GM12878 (cell line): ENCODE measurements at regions of chr2 and their contacts with region 1.

Region 1: GRCh38 chr2:30165050-30165520 is 18.3 kb downstream of the YPEL5 start:
- DNase-seq: peak; percentile 57
- ATAC-seq: peak; percentile 99
- H3K4me3 ChIP-seq: no peak overlapping the region
- H3K27ac ChIP-seq: no peak overlapping the region
- H3K4me1 ChIP-seq: no peaks in the 10 kb centered on the region; the same call in 1 of the 2 replicates
- H3K27me3 ChIP-seq: peaks cover 0 to 2% of the 10 kb centered on the region in 2 experiments; a peak in 1 of 4 replicates
- CTCF ChIP-seq: peak; percentile 71 to 91 (median 89)
- EP300 ChIP-seq: no peak
- POLR2A ChIP-seq: no peak
- RAD21 ChIP-seq: peak; percentile 92

Region 2: DNA sequence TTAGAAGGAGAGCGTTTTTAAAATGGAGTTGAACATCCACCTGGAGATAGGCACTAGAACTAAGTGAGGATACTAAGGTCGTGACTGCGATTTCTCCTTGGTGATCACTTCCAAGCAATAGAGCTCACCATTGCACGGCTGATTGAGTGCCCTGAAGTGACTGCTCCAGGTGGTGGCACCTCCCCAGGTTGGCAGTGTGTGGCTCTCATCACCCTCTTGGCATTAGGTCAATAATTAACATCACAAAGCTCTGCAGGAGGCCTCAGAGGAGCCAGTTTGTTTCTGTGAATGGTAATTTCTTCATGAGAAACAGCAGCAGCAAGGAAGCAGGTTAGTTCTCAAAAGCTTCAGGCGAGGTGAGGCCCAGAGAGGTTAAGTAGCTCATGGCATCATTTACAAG is 790.3 kb before region 1 on chr2:
- CTCF ChIA-PET with region 1: no interaction called
- POLR2A ChIA-PET with region 1: no interaction called
- RAD21 ChIA-PET with region 1: no interaction called
- SMC1A ChIA-PET with region 1: no interaction called
- in situ Hi-C with region 1: no loop called
- intact Hi-C with region 1: no loop called
- DNase-seq: no peak
- ATAC-seq: no peak
- H3K4me3 ChIP-seq: no peak overlapping the region
- H3K27ac ChIP-seq: no peak overlapping the region
- H3K4me1 ChIP-seq: no peaks in the 10 kb centered on the region
- H3K27me3 ChIP-seq: no peaks in the 10 kb centered on the region; a peak in 3 of 4 replicates
- CTCF ChIP-seq: no peak
- EP300 ChIP-seq: no peak
- POLR2A ChIP-seq: no peak
- RAD21 ChIP-seq: no peak

Region 3: DNA sequence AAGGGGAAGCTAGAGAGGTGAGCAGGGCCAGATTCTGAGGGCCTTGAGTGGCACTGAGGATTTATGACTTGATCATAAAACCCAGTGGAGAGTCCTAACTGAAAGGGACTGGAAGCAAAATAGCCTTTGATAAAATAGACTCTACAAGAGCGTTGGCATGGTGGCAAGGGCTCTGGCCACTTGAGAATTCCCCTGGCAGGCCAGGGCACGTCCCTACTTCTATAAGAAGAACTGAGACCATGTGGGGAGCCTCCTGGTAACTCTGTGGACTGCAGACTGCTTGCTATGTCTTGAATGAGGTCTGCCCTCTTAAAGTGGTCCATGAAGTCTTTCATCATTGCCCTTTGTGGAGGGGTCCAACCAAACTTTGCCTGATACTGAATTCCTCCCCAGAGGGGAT is 568.5 kb before region 1 on chr2:
- CTCF ChIA-PET with region 1: no interaction called
- POLR2A ChIA-PET with region 1: no interaction called
- RAD21 ChIA-PET with region 1: no interaction called
- SMC1A ChIA-PET with region 1: no interaction called
- in situ Hi-C with region 1: no loop called
- intact Hi-C with region 1: no loop called
- DNase-seq: peak; percentile 17
- ATAC-seq: peak; percentile 93
- H3K4me3 ChIP-seq: no peak overlapping the region
- H3K27ac ChIP-seq: no peak overlapping the region
- H3K4me1 ChIP-seq: no peaks in the 10 kb centered on the region; the same call in 1 of the 2 replicates
- H3K27me3 ChIP-seq: no peaks in the 10 kb centered on the region
- CTCF ChIP-seq: no peak
- EP300 ChIP-seq: no peak
- POLR2A ChIP-seq: no peak
- RAD21 ChIP-seq: no peak

Region 4: DNA sequence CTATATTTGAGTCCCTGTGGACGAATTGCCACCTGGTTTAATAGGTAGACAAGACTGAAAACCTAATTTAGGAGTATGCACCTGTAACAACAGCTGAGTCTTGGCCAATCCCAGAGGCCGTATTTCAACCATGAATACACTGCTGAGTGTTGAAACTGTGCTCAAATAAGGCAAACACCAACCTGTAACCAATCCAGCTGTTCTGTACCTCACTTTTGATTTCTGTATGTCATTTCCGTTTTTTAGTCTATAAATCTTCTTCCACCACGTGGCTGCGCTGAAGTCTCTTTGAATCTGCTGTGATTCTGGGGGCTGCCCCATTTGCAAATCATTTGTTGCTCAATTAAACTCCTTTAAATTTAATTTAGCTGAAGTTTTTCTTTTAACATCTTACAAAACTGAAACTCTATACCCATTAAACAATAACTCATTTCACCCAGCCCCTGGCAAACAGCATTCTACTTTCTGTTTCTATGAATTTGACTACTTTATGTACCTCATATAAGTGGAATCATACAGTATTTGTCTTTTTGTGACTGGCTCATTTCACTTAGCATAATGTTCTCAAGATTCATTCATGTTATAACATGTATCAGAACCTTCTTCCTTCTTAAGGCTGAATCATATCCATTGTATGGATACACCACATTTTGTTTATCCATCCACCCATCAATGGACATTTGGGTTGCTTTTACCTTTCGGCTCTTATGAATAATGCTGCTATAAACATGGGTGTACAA is 25.8 kb before region 1 on chr2:
- CTCF ChIA-PET with region 1: interaction called, 28 read pairs
- POLR2A ChIA-PET with region 1: no interaction called
- RAD21 ChIA-PET with region 1: interaction called, 5 read pairs
- SMC1A ChIA-PET with region 1: interaction called, 18 read pairs
- in situ Hi-C with region 1: no loop called
- intact Hi-C with region 1: no loop called
- DNase-seq: no peak
- ATAC-seq: peak; percentile 89
- H3K4me3 ChIP-seq: no peak overlapping the region
- H3K27ac ChIP-seq: no peak overlapping the region
- H3K4me1 ChIP-seq: 0 out of 2 replicates have a peak, but pooled peaks cover 3% of the 10 kb centered on the region
- H3K27me3 ChIP-seq: no peaks in the 10 kb centered on the region
- CTCF ChIP-seq: no peak; a peak in 1 of 6 replicates
- EP300 ChIP-seq: no peak
- POLR2A ChIP-seq: no peak
- RAD21 ChIP-seq: 0 out of 2 replicates have a peak, but pooled peaks have one; percentile 16

Region 5: GRCh38 chr2:30193104-30193681 is 28.1 kb after region 1 on chr2:
- CTCF ChIA-PET with region 1: interaction called, 36 read pairs
- POLR2A ChIA-PET with region 1: no interaction called
- RAD21 ChIA-PET with region 1: interaction called, 3 read pairs
- SMC1A ChIA-PET with region 1: interaction called, 6 read pairs
- in situ Hi-C with region 1: no loop called
- intact Hi-C with region 1: no loop called
- DNase-seq: no peak
- ATAC-seq: no peak
- H3K4me3 ChIP-seq: no peak overlapping the region
- H3K27ac ChIP-seq: no peak overlapping the region
- H3K4me1 ChIP-seq: no peaks in the 10 kb centered on the region
- H3K27me3 ChIP-seq: no peaks in the 10 kb centered on the region
- CTCF ChIP-seq: no peak
- EP300 ChIP-seq: no peak
- POLR2A ChIP-seq: no peak
- RAD21 ChIP-seq: no peak

Region 6: GRCh38 chr2:30225131-30225762 is 60.2 kb after region 1 on chr2:
- CTCF ChIA-PET with region 1: interaction called, 35 read pairs
- POLR2A ChIA-PET with region 1: no interaction called
- RAD21 ChIA-PET with region 1: interaction called, 25 read pairs
- SMC1A ChIA-PET with region 1: interaction called, 18 read pairs
- in situ Hi-C with region 1: no loop called
- intact Hi-C with region 1: no loop called
- DNase-seq: no peak
- ATAC-seq: peak; percentile 72
- H3K4me3 ChIP-seq: peak overlapping the region; percentile 56
- H3K27ac ChIP-seq: peak overlapping the region; percentile 95
- H3K4me1 ChIP-seq: peaks cover 45% of the 10 kb centered on the region
- H3K27me3 ChIP-seq: no peaks in the 10 kb centered on the region
- CTCF ChIP-seq: 0 out of 6 replicates have a peak, but pooled peaks of 1 of the 3 experiments have one; percentile 7
- EP300 ChIP-seq: no peak
- POLR2A ChIP-seq: peak; percentile 60
- RAD21 ChIP-seq: no peak

Region 7: DNA sequence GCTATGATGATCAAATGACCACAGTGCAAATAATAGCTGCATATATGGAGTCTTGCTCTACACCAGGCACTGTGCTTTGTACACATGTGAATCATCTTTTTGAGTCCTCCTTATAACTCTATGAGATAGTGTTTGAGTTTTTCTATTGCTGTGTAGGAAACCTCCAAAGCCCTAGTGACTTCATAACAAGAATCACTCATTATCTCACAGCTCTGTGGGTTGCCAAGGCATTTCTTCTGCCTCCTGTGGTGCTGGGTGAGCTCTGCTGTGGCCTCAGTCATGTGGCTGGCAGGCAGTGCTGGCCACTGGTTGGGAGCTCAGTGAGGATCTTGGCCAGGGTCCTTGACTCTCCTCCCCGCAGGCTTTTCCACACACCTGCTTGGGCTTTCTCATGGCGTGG is 488.8 kb after region 1 on chr2:
- CTCF ChIA-PET with region 1: interaction called, 11 read pairs
- POLR2A ChIA-PET with region 1: no interaction called
- RAD21 ChIA-PET with region 1: no interaction called
- SMC1A ChIA-PET with region 1: no interaction called
- in situ Hi-C with region 1: no loop called
- intact Hi-C with region 1: no loop called
- DNase-seq: no peak
- ATAC-seq: peak; percentile 31; the same call in 2 of the 3 replicates
- H3K4me3 ChIP-seq: no peak overlapping the region
- H3K27ac ChIP-seq: no peak overlapping the region
- H3K4me1 ChIP-seq: no peaks in the 10 kb centered on the region
- H3K27me3 ChIP-seq: no peaks in the 10 kb centered on the region; a peak in 1 of 4 replicates
- CTCF ChIP-seq: no peak
- EP300 ChIP-seq: no peak
- POLR2A ChIP-seq: no peak
- RAD21 ChIP-seq: no peak

Region 8: GRCh38 chr2:31170071-31170698 is 1005.1 kb after region 1 on chr2:
- CTCF ChIA-PET with region 1: interaction called, 19 read pairs
- POLR2A ChIA-PET with region 1: no interaction called
- RAD21 ChIA-PET with region 1: interaction called, 14 read pairs
- SMC1A ChIA-PET with region 1: interaction called, 6 read pairs
- in situ Hi-C with region 1: loop called (anchors 25 kb)
- intact Hi-C with region 1: no loop called
- DNase-seq: peak; percentile 21
- ATAC-seq: peak; percentile 94
- H3K4me3 ChIP-seq: no peak overlapping the region
- H3K27ac ChIP-seq: no peak overlapping the region
- H3K4me1 ChIP-seq: no peaks in the 10 kb centered on the region
- H3K27me3 ChIP-seq: no peaks in the 10 kb centered on the region
- CTCF ChIP-seq: peak; percentile 93 to 97 (median 95)
- EP300 ChIP-seq: no peak
- POLR2A ChIP-seq: no peak
- RAD21 ChIP-seq: peak; percentile 85